PC-9 (cell line): ENCODE measurements at regions of chr17 and their contacts with region 1.

Region 1: DNA sequence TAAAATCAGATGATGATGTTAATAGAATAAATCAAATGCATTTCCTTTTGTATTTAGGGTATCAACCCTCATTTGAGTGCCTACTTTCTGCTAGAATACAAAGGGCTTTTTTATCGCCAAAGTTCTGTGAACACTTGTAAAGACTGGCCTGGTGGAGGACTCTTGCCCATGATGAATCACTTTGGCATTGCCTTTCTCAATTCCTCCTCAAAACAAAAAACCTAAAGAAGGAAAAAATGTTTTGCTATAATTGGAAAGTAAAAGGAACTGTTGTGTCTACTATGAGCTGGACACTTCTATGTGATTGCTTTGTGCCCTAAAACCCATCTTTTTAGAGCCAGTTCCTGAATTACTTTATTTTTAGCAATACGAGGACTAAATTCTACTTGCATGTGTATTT is 13.0 kb upstream of the DHRS11 start:
- DNase-seq: no peak
- H3K4me3 ChIP-seq: no peak overlapping the region
- H3K27ac ChIP-seq: no peak overlapping the region
- H3K4me1 ChIP-seq: no peaks in the 10 kb centered on the region
- H3K27me3 ChIP-seq: no peaks in the 10 kb centered on the region
- CTCF ChIP-seq: no peak

Region 2: DNA sequence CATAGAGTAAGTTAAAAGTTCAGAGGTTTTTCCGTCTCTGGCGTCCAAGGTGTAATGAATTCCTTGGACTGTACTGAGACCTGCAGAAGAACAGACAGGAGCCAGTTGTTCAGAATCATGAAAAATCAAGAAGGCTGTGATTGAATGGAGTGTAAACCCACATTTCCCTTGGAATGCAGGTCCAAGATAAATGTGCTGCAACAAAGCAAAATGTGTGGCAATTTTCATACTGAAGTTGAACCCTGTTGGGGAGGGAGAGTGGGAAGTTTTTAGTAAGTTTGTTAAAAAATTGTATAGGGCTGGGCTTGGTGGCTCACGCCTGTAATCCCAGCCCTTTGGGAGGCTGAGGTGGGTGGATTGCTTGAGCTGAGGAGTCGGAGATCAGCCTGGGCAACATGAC is 12.6 kb before region 1 on chr17:
- CTCF ChIA-PET with region 1: interaction called, 6 read pairs
- POLR2A ChIA-PET with region 1: interaction called, 12 read pairs
- intact Hi-C with region 1: no loop called
- DNase-seq: no peak
- H3K4me3 ChIP-seq: no peak overlapping the region
- H3K27ac ChIP-seq: no peak overlapping the region
- H3K4me1 ChIP-seq: no peaks in the 10 kb centered on the region
- H3K27me3 ChIP-seq: no peaks in the 10 kb centered on the region
- CTCF ChIP-seq: no peak